ENCODE measurements at regions of chr14 and their contacts with region 1.

Region 1: GRCh38 chr14:55102141-55102621 is 26.9 kb upstream of the LGALS3 start:
- DNase-seq: peak; percentile 99
- ATAC-seq: peak; percentile 84
- H3K4me3 ChIP-seq: 0 out of 2 replicates have a peak overlapping the region, but pooled peaks have one; percentile 4
- H3K27ac ChIP-seq: peak overlapping the region; percentile 99
- H3K4me1 ChIP-seq: peaks cover 62% of the 10 kb centered on the region
- H3K27me3 ChIP-seq: no peaks in the 10 kb centered on the region
- CTCF ChIP-seq: no peak
- EP300 ChIP-seq: peak; percentile 88 to 93; a peak in 3 of 4 replicates
- POLR2A ChIP-seq: peak; percentile 64
- RAD21 ChIP-seq: no peak

Region 2: GRCh38 chr14:55045087-55045486 is 57.1 kb before region 1 on chr14:
- CTCF ChIA-PET with region 1: interaction called, 3 read pairs
- POLR2A ChIA-PET with region 1: no interaction called
- RAD21 ChIA-PET with region 1: interaction called, 17 read pairs
- SMC1A ChIA-PET with region 1: interaction called, 18 read pairs
- in situ Hi-C with region 1: no loop called
- intact Hi-C with region 1: loop called (anchors 2 kb)
- DNase-seq: no peak
- ATAC-seq: peak; percentile 82
- H3K4me3 ChIP-seq: no peak overlapping the region
- H3K27ac ChIP-seq: peak overlapping the region; percentile 19; the same call in 1 of the 2 replicates
- H3K4me1 ChIP-seq: 0 out of 2 replicates have a peak, but pooled peaks cover 4% of the 10 kb centered on the region
- H3K27me3 ChIP-seq: no peaks in the 10 kb centered on the region
- CTCF ChIP-seq: no peak
- EP300 ChIP-seq: no peak
- POLR2A ChIP-seq: no peak
- RAD21 ChIP-seq: no peak

Region 3: GRCh38 chr14:55071870-55072640 is 30.1 kb before region 1 on chr14:
- CTCF ChIA-PET with region 1: interaction called, 9 read pairs
- POLR2A ChIA-PET with region 1: interaction called, 16 read pairs
- RAD21 ChIA-PET with region 1: interaction called, 30 read pairs
- SMC1A ChIA-PET with region 1: interaction called, 42 read pairs
- in situ Hi-C with region 1: no loop called
- intact Hi-C with region 1: loop called (anchors 2 kb)
- DNase-seq: peak; percentile 92
- ATAC-seq: peak; percentile 76
- H3K4me3 ChIP-seq: 0 out of 2 replicates have a peak overlapping the region, but pooled peaks have one; percentile 28
- H3K27ac ChIP-seq: peak overlapping the region; percentile 82
- H3K4me1 ChIP-seq: peaks cover 54% of the 10 kb centered on the region
- H3K27me3 ChIP-seq: no peaks in the 10 kb centered on the region
- CTCF ChIP-seq: no peak
- EP300 ChIP-seq: peak in 1 of 2 experiments; percentile 51; a peak in 2 of 4 replicates
- POLR2A ChIP-seq: peak; percentile 50; the same call in 1 of the 2 replicates
- RAD21 ChIP-seq: no peak

Region 4: GRCh38 chr14:55117803-55118441 is 15.7 kb after region 1 on chr14:
- CTCF ChIA-PET with region 1: interaction called, 4 read pairs
- POLR2A ChIA-PET with region 1: interaction called, 14 read pairs
- RAD21 ChIA-PET with region 1: interaction called, 4 read pairs
- SMC1A ChIA-PET with region 1: interaction called, 7 read pairs
- in situ Hi-C with region 1: no loop called
- intact Hi-C with region 1: no loop called
- DNase-seq: no peak
- ATAC-seq: no peak
- H3K4me3 ChIP-seq: no peak overlapping the region
- H3K27ac ChIP-seq: no peak overlapping the region
- H3K4me1 ChIP-seq: no peaks in the 10 kb centered on the region
- H3K27me3 ChIP-seq: no peaks in the 10 kb centered on the region
- CTCF ChIP-seq: no peak
- EP300 ChIP-seq: no peak
- POLR2A ChIP-seq: no peak
- RAD21 ChIP-seq: no peak

Region 5: DNA sequence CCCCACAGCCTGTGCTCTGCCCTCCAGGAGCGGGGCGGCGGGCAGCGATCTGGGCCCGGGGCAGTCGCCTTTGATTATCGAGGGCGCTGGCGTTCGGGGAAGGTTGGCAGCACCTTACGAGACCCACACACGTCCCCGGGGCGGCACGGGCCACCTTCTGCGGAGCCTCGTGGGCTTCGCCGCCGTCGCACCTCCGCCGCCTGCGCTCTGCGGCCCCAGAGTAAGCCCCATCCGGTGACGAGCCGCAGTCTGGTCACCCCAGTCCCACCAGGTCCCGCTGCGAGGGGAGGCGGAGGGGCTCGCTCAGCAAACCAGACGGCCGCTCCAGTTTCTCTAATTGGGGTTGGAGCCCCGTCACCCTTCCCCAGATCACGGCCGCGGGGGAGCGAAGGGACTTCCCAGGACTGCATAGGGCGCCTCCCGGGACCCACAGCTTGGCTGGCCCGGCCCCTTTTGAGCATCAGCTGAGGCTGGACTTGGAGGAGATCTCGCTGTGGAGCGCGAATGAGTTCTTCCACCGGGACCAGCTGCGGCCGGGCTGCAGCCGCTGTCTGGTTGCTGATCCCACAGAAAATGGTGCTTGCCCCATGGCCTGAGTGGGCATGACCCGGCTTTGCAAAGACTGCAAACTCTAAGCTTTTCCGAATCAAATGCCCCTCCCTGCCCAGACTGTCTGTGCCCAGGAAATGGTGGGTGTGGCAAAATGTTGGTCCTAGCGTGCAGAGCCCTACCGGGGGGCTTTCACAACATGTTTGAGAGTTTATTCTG is 27.4 kb after region 1 on chr14:
- CTCF ChIA-PET with region 1: interaction called, 5 read pairs
- POLR2A ChIA-PET with region 1: interaction called, 7 read pairs
- RAD21 ChIA-PET with region 1: interaction called, 10 read pairs
- SMC1A ChIA-PET with region 1: interaction called, 26 read pairs
- in situ Hi-C with region 1: no loop called
- intact Hi-C with region 1: loop called (anchors 1 kb)
- DNase-seq: no peak
- ATAC-seq: peak; percentile 83
- H3K4me3 ChIP-seq: peak overlapping the region; percentile 73
- H3K27ac ChIP-seq: 0 out of 2 replicates have a peak overlapping the region, but pooled peaks have one; percentile 24
- H3K4me1 ChIP-seq: peaks cover 6% of the 10 kb centered on the region
- H3K27me3 ChIP-seq: no peaks in the 10 kb centered on the region
- CTCF ChIP-seq: no peak
- EP300 ChIP-seq: no peak
- POLR2A ChIP-seq: peak; percentile 71
- RAD21 ChIP-seq: no peak

Region 6: DNA sequence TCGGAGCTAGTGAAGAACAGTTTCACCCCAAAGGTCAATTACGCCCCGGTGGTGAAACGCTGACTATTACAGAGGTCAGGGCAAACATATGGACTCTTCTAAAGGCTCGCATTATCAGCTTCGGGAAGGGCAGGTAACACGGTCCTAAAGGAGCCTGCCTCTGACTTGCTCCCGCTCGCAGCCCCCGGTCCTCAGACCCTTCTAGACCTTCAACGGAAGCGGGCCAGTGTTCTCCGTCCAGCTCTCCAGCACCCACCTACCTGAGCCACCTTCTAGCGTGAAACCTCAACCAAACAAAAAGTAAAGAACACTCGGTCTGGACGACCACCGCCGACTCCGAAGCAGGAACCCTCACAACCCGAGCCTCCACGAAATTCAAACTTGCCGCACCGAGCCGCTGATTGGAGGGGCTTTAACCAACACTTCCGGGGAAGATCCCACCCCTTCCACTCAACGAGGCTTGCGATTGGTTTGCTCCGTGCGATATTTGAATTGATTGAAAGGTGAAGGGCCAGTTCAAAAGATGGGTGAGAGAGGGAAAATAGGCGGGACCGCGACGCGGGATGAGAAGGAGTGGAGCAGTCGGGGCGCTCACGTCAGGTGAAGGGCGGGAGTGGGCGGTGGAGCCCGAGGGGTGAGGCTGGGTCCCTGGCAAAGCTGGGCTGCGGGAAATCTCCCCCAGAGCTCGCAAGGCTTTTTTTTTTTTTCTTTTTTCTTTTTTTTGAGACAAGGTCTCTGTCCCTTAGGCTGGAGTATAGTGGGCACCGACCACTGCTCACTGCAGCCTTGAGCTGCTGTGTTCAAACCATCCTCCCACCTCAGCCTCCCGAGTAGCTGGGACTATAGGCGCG is 89.2 kb after region 1 on chr14 and contains the start of gene DLGAP5:
- CTCF ChIA-PET with region 1: no interaction called
- POLR2A ChIA-PET with region 1: interaction called, 3 read pairs
- RAD21 ChIA-PET with region 1: interaction called, 4 read pairs
- SMC1A ChIA-PET with region 1: interaction called, 7 read pairs
- in situ Hi-C with region 1: no loop called
- intact Hi-C with region 1: loop called (anchors 5 kb)
- DNase-seq: peak; percentile 98
- ATAC-seq: peak; percentile 98
- H3K4me3 ChIP-seq: peak within 1 kb of the TSS; percentile 85
- H3K27ac ChIP-seq: peak within 1 kb of the TSS; percentile 77
- H3K4me1 ChIP-seq: peaks cover 4% of the 10 kb centered on the region; the same call in 1 of the 2 replicates
- H3K27me3 ChIP-seq: no peaks in the 10 kb centered on the region
- CTCF ChIP-seq: no peak
- EP300 ChIP-seq: no peak
- POLR2A ChIP-seq: peak; percentile 77
- RAD21 ChIP-seq: no peak
- polyA plus RNA-seq, gene DLGAP5: 57.9 to 68.4 TPM

Measured in GM12878 (cell line).